Psoas muscle (tissue), 8 donors: ENCODE measurements at regions of chr1 and their contacts with region 1.

Region 1: GRCh38 chr1:156797212-156797871 is 19.3 kb downstream of the SH2D2A start:
- DNase-seq: no peak
- ATAC-seq: peak in 3 of 4 donors; percentile 39 to 63 (median 48)
- H3K4me3 ChIP-seq: no peak overlapping the region
- H3K27ac ChIP-seq: no peak overlapping the region
- H3K4me1 ChIP-seq: peaks cover 23% of the 10 kb centered on the region
- H3K27me3 ChIP-seq: no peaks in the 10 kb centered on the region
- CTCF ChIP-seq: peak; percentile 73

Region 2: GRCh38 chr1:156618853-156619581 is 178.3 kb before region 1 on chr1 and contains the start of gene HAPLN2:
- intact Hi-C with region 1: no loop called
- DNase-seq: no peak
- ATAC-seq: peak in 1 of 4 donors; percentile 21
- H3K4me3 ChIP-seq: no peak within 1 kb of the TSS
- H3K27ac ChIP-seq: no peak within 1 kb of the TSS
- H3K4me1 ChIP-seq: peaks cover 3% of the 10 kb centered on the region
- H3K27me3 ChIP-seq: peaks cover 0 to 50% (median 11%) of the 10 kb centered on the region in 3 donors
- CTCF ChIP-seq: peak; percentile 13
- total RNA-seq, gene HAPLN2: 0.28 to 2.2 (median 0.58) TPM

Region 3: DNA sequence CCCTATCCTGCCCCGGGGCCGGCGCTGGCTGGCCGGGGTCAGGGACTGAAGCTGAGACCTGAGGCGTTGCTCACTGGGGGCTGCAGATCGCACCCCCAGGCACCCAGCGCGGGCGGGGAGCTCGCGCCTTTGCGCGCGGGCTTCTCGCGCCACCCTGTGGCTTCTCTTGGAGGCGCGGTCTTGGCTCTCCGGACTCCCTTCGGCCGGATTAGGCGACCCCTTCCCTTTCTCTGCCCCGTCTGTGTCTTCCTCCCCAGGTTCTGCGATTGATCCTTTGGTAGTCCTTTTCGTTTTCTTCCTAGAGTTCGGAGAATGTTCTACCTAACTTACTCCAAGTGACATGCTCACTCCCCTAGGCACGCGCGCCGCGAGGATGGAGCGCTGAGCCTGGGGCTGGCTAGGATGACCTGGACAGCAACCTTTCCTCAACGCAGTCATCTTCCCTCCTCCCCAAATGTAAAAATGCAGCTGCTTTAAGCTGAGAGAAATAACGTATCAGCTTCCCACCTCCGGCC is 62.8 kb after region 1 on chr1:
- intact Hi-C with region 1: loop called in 1 of 2 experiments (anchors 1 kb)
- DNase-seq: peak; percentile 44 to 73
- ATAC-seq: peak; percentile 65 to 93 (median 84)
- H3K4me3 ChIP-seq: peak overlapping the region; percentile 59
- H3K27ac ChIP-seq: no peak overlapping the region
- H3K4me1 ChIP-seq: peaks cover 19% of the 10 kb centered on the region
- H3K27me3 ChIP-seq: peaks cover 0 to 71% (median 17%) of the 10 kb centered on the region in 3 donors
- CTCF ChIP-seq: peak; percentile 85